Activated T-helper 1 cell treated with anti-CD3 and anti-CD28 coated beads, Interleukin-12 subunit alpha, Interleukin-12 subunit beta, Interleukin-2, Interleukin-4 antibody, amounts not matched to agents 30 ng/mL and 10 ng/mL and 1 ng/mL, durations not matched to agents 14 hours and 24 hours and 36 hours (primary cell): ENCODE measurements at regions of chr2 and their contacts with region 1.

Region 1: DNA sequence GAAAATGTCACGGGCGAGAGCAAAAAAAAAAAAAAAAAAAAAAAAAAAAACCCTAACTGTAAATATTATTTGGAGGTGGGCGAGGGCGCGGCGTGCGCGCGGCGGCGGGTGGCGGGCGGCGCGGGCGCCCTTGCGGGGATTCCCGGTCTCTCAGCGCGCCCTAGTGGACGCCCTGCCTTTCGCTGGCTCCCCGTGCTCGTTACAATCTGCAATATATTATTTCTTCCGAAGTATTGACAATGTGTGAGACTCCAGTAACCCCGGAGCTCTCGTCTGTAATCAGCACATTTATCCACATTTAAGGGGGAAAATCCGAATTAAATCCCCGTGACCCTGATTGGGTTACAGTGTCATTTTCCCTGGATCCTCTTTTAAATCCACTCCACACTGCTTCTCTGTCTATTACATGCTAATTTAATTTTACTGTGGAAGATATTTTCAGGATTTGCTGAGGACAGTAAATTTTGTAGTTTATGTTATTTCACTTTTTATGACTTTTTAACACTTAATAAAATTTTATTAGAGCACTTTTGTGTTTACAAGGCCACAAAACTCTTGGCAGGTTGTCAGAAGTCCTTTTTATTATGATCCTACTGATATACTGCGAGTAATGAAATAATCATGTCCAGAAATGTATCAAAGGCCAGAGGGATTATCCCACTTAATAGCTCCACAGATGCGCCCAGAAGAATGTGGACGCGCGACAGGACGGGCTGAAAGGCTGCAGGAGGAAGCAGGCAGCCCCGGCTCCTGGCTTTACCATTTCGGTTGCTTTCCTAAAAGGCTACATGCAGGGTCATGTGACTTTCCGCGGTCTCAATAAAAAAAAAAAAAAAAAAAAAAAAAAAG is 369.1 kb downstream of the MTX2 start:
- DNase-seq: peak; percentile 28
- H3K4me3 Mint-ChIP-seq: peak overlapping the region; percentile 58
- H3K27ac Mint-ChIP-seq: no peak overlapping the region
- H3K4me1 Mint-ChIP-seq: peaks cover 6% of the 10 kb centered on the region
- H3K27me3 Mint-ChIP-seq: peaks cover 72% of the 10 kb centered on the region

Region 2: GRCh38 chr2:175366815-175367214 is 1271.6 kb before region 1 on chr2:
- intact Hi-C with region 1: loop called (anchors 5 kb)
- DNase-seq: no peak
- H3K4me3 Mint-ChIP-seq: no peak overlapping the region
- H3K27ac Mint-ChIP-seq: no peak overlapping the region
- H3K4me1 Mint-ChIP-seq: no peaks in the 10 kb centered on the region
- H3K27me3 Mint-ChIP-seq: peaks cover 7% of the 10 kb centered on the region

Region 3: DNA sequence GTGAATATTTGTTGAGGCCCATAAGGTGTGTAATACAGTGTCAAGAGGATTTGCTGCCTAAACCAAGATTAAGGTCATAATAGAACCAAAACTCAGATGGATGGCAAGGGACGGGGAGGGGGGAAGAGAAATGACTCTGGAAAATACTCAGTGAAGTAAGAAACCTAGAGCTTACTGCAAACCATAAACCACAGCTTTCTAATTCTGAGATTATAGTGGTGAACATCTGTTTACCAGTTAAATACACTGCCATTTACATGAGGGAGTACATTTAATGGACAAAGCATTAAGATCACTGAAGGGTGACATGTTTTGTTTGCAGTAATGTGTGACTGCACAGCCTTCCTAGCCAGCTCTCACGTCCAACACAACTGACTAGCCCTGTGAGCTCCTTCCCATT is 574.4 kb before region 1 on chr2:
- intact Hi-C with region 1: loop called (anchors 10 kb)
- DNase-seq: no peak
- H3K4me3 Mint-ChIP-seq: no peak overlapping the region
- H3K27ac Mint-ChIP-seq: no peak overlapping the region
- H3K4me1 Mint-ChIP-seq: peaks cover 10% of the 10 kb centered on the region
- H3K27me3 Mint-ChIP-seq: peaks cover 70% of the 10 kb centered on the region

Region 4: GRCh38 chr2:176140513-176141317 is 497.7 kb before region 1 on chr2:
- intact Hi-C with region 1: loop called (anchors 1 kb)
- DNase-seq: peak; percentile 49
- H3K4me3 Mint-ChIP-seq: peak overlapping the region; percentile 3
- H3K27ac Mint-ChIP-seq: no peak overlapping the region
- H3K4me1 Mint-ChIP-seq: peaks cover 11% of the 10 kb centered on the region
- H3K27me3 Mint-ChIP-seq: peaks cover 68% of the 10 kb centered on the region

Region 5: GRCh38 chr2:176454893-176455811 is 183.2 kb before region 1 on chr2:
- intact Hi-C with region 1: loop called (anchors 1 kb)
- DNase-seq: peak; percentile 59
- H3K4me3 Mint-ChIP-seq: no peak overlapping the region
- H3K27ac Mint-ChIP-seq: no peak overlapping the region
- H3K4me1 Mint-ChIP-seq: no peaks in the 10 kb centered on the region
- H3K27me3 Mint-ChIP-seq: peaks cover 13% of the 10 kb centered on the region

Region 6: DNA sequence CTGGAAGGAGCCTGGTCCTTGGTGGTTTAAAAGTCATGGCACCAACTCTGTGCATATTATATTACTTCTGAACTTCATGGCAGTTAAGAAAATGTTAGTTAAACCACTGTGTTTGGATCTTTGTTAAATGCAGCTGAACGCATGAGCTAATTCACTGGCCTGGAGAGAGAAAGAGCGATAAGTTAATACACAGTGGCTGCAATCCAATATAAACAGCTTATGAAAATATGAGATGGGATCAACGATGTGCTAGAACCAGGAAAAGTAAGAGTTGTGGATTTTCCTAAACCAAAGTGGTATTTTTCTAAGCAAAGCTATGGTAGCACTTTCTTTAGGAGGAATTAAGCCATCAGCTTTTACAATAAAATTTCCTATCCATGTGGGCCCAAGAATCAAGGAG is 42.4 kb before region 1 on chr2:
- intact Hi-C with region 1: no loop called
- DNase-seq: no peak
- H3K4me3 Mint-ChIP-seq: no peak overlapping the region
- H3K27ac Mint-ChIP-seq: no peak overlapping the region
- H3K4me1 Mint-ChIP-seq: no peaks in the 10 kb centered on the region
- H3K27me3 Mint-ChIP-seq: peaks cover 15% of the 10 kb centered on the region

Region 7: DNA sequence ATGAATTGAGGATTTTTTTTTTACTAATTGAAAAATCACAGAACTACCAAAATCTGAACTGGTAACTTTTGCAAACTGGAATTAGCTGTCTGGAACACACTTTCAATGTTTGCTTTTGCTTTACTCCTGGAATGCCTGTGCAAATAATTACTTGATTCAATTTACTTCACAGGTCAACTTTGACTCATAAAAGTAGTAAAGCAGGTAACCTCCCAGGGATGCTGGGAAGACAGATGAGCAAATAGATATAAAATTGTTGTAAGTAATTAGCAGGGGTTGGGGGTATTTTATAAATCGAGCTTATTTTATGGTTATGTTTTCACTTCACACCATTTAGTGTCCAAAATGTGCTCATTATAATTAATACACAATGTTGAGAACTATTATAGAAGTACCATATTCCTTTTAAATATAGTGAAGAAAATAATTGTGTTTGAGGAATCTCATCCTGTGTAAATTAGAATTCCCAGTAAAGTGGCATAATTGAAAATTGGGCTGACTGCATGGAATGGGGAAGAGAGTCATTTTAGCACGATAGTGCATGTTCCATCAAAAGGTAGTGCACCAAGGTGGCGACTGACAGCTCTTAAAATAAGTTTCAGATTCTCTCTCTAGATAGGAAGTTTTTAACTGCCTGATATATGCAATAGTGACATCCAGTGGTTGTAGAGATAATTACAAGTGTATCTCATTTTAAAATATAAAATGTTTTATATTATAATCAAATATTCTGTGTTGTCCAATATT is 176.1 kb after region 1 on chr2:
- intact Hi-C with region 1: no loop called
- DNase-seq: no peak
- H3K4me3 Mint-ChIP-seq: no peak overlapping the region
- H3K27ac Mint-ChIP-seq: no peak overlapping the region
- H3K4me1 Mint-ChIP-seq: peaks cover 5% of the 10 kb centered on the region
- H3K27me3 Mint-ChIP-seq: peaks cover 2% of the 10 kb centered on the region

Region 8: DNA sequence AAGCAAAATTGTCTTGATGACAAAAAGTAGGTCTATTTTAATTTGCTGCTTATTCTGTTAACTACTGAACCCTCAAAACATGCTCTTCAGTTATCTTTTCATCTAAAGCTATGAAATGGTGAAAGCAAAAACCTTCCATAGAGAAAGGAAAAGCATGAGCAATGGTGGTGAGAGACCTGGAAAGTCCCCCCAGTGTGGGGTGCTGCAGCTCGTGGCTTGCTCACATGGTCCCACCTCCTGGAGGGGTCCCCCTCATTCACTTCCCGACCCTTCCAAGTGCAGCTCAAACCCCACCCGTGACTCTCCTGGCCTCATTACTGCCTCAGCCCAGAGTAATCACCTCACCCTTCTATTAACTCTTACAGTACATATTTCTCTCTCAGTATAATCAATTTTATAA is 272.4 kb after region 1 on chr2:
- intact Hi-C with region 1: no loop called
- DNase-seq: no peak
- H3K4me3 Mint-ChIP-seq: no peak overlapping the region
- H3K27ac Mint-ChIP-seq: no peak overlapping the region
- H3K4me1 Mint-ChIP-seq: peaks cover 16% of the 10 kb centered on the region
- H3K27me3 Mint-ChIP-seq: peaks cover 13% of the 10 kb centered on the region